PC-9 (cell line): ENCODE measurements at regions of chr16 and their contacts with region 1.

Region 1: DNA sequence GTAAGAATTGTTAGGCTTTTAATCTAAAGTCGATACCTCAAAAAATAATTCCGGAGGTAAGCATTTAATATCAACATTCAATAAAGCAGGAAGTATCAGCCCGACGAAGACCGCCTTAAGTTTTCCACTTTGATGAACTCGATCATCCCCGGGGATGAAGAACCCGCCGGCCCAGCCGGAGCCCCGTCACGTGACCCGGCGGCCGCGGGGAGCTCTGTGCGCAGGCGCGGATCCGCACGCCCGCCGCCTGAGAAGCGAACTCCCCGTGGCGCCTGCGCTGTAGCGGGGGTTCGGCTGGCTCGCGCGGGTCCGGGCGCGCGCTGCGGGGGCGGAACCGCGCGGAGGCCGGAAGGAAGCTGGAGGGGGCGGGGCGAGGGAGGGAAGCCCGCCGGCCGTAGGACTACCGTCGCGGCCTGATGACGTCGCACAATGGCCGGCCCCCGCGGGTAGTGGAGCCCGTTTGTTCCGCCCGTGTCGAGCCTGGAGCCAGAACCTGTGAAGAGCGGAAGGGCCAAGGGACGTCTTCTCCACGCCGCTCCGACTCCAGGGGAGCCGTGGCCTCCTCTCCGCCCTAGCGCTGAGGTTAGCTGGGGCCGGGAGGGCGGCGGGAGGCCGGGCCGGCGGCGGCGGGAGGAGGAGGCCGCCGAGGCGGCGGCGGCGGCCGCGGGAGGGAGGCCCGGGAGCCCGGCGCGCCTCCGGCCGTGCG is at the start of gene ZC3H18:
- DNase-seq: peak; percentile 78 to 97
- H3K4me3 ChIP-seq: peak within 1 kb of the TSS; percentile 95
- H3K27ac ChIP-seq: no peak within 1 kb of the TSS
- H3K4me1 ChIP-seq: peaks cover 18% of the 10 kb centered on the region
- H3K27me3 ChIP-seq: no peaks in the 10 kb centered on the region
- CTCF ChIP-seq: no peak
- total RNA-seq, gene ZC3H18: 76.4 and 78.4 TPM in 2 replicates

Region 2: DNA sequence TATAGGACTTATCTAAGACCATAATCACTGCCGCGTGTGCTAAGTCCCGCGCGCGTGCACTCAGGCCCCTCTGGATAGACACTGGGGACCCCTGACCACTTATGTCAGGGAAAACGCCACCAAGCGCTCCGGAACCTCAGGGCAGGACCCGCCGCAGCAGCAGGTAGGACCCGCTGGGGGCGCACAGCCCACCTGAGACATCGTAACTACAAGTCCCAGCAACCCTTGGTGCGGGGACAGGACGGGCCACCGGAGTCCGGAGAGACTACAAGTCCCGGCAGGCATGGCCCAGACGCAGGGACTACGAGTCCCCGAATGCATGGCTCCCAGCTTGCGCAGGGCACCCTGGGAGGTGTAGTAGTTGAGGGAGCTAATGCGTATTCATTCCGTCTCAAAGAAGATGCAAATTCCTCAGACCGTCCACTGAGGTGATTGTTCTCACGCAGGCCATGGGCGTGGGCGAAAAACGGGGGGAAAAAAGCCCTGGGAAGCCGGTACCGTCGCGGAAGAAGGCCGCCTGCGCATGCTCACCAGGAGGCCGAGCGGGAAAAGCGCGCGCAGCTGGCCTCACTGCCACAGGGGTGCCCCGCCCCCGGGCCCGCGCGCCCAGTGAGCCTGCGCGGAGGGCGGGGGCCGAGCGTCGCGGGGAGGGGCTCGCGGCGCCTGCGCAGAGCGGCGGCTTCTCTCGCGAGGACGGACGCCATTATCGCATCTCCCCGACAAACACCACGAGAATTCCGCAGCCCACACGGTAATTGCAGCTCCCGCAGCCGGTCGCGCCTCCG is 619.2 kb before region 1 on chr16 and contains the start of gene BANP:
- CTCF ChIA-PET with region 1: no interaction called
- POLR2A ChIA-PET with region 1: no interaction called
- intact Hi-C with region 1: loop called (anchors 1 kb)
- DNase-seq: peak; percentile 98 to 99
- H3K4me3 ChIP-seq: peak within 1 kb of the TSS; percentile 96
- H3K27ac ChIP-seq: peak within 1 kb of the TSS; percentile 77
- H3K4me1 ChIP-seq: peaks cover 30% of the 10 kb centered on the region
- H3K27me3 ChIP-seq: no peaks in the 10 kb centered on the region
- CTCF ChIP-seq: peak; percentile 69
- total RNA-seq, gene BANP: 60.9 and 73.2 TPM in 2 replicates

Region 3: DNA sequence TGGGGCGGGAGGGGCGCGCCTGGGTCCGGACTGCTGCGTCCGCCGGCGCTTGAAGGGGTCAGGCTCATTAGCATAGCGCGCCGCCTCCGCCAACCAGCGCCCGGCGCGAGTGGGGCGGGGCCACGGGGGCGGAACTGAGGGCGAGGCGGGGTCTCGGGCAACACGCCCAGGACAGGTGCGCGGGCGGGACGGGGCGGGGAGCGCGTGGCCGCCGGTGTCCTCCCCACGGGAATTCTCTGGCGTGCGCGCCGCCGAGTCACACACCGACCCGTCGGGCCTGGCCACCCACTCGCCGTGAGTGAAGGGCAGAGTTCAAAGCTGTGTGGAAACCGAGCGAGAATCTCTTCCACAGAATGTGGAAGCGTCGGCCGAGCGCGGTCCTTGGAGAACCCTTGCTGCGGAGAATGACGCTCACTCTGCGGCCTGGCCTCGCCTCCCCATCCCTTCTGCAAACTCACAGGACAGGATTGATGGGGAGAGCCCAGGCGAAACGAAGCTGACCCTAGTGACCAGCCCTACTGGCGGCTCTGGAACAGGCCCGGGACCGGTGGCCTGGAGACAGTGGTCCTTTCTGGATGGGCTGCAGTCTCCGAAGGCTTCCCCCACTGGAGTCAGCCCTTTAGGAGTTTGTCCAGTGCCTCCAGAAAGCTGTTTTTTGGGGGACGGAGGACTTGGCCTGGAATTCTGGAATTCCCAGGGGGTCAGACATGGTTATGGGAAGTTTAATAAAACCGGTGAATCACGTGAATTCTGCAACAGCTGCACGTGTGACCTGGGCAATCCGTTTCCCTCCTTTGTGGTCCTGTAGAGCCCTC is 116.5 kb after region 1 on chr16 and contains the start of gene SNAI3:
- CTCF ChIA-PET with region 1: no interaction called
- POLR2A ChIA-PET with region 1: no interaction called
- intact Hi-C with region 1: no loop called
- DNase-seq: peak; percentile 64 to 94
- H3K4me3 ChIP-seq: peak within 1 kb of the TSS; percentile 88
- H3K27ac ChIP-seq: no peak within 1 kb of the TSS
- H3K4me1 ChIP-seq: peaks cover 20% of the 10 kb centered on the region
- H3K27me3 ChIP-seq: no peaks in the 10 kb centered on the region
- CTCF ChIP-seq: no peak
- total RNA-seq, gene SNAI3: 1.3 and 2.0 TPM in 2 replicates